ENCODE measurements at regions of chrX and their contacts with region 1.

Region 1: GRCh38 chrX:318739-319578 is at the start of gene GTPBP6:
- DNase-seq: peak; percentile 99 to 100 (median 100)
- H3K4me3 ChIP-seq: peak within 1 kb of the TSS; percentile 96
- H3K27ac ChIP-seq: peak within 1 kb of the TSS; percentile 87 to 99
- H3K4me1 ChIP-seq: peaks cover 1% of the 10 kb centered on the region
- H3K27me3 ChIP-seq: no peaks in the 10 kb centered on the region
- CTCF ChIP-seq: no peak
- EP300 ChIP-seq: no peak
- POLR2A ChIP-seq: peak; percentile 54
- total RNA-seq, gene GTPBP6: 29.3 to 69.0 (median 47.8) TPM

Region 2: GRCh38 chrX:386768-387575 is 68.0 kb after region 1 on chrX and contains the start of gene PPP2R3B:
- intact Hi-C with region 1: loop called in 1 of 4 experiments (anchors 2 kb)
- DNase-seq: peak; percentile 99 to 100 (median 99)
- H3K4me3 ChIP-seq: peak within 1 kb of the TSS; percentile 67
- H3K27ac ChIP-seq: peak within 1 kb of the TSS; percentile 96 to 99
- H3K4me1 ChIP-seq: no peaks in the 10 kb centered on the region
- H3K27me3 ChIP-seq: no peaks in the 10 kb centered on the region
- CTCF ChIP-seq: peak in 2 of 3 donors; percentile 40 to 45
- EP300 ChIP-seq: no peak
- POLR2A ChIP-seq: peak; percentile 44
- total RNA-seq, gene PPP2R3B: 11.8 to 25.0 (median 18.4) TPM

Region 3: GRCh38 chrX:1391707-1392375 is 1072.9 kb after region 1 on chrX and contains the start of gene SLC25A6:
- intact Hi-C with region 1: loop called in 1 of 4 experiments (anchors 2 kb)
- DNase-seq: peak; percentile 99 to 100 (median 99)
- H3K4me3 ChIP-seq: peak within 1 kb of the TSS; percentile 98
- H3K27ac ChIP-seq: peak within 1 kb of the TSS; percentile 98 to 100
- H3K4me1 ChIP-seq: peaks cover 16% of the 10 kb centered on the region
- H3K27me3 ChIP-seq: no peaks in the 10 kb centered on the region
- CTCF ChIP-seq: peak in 2 of 3 donors; percentile 32 to 53
- EP300 ChIP-seq: peak; percentile 8
- POLR2A ChIP-seq: peak; percentile 91
- total RNA-seq, gene SLC25A6: 473 to 630 (median 519) TPM

Measured in ovary (tissue), 10 donors.